ENCODE measurements at regions of chr1 and their contacts with region 1.

Region 1: DNA sequence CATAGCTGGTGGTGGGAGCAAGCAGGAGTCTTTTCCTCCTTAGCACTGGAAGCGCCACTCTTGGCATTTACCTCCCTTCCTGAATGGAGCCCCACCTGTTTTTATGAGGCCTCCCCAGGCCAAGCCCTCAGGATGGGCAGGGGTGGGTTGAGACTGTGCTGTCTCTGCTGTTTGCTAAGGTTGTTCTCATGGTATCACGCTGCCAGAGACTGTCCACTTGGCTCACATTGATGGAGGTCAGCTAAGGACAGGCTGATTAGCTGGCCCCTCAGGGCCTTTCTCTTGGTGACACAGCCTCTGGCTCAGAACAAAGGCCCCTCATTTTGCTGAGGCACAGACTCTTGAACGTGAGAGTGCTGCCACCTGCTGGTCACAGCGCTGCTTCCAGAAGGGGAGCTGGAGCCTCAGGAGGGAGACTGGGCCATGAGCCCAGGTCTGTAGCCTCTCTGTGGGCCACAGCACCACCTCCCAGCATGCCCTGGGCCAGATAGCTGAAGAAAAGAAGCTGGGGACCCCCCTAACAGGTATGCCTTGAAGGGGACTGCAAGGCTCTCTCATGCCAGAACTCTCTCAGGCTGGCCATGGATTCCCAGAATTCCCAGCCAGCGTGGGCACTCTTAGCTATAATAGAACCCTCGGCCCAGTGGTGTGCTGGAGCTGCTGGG is 85.6 kb downstream of the CD58 start:
- DNase-seq: peak; percentile 68 to 87 (median 77)
- H3K4me3 ChIP-seq: no peak overlapping the region
- H3K4me3 Mint-ChIP-seq: no peak overlapping the region
- H3K27ac ChIP-seq: no peak overlapping the region
- H3K27ac Mint-ChIP-seq: no peak overlapping the region
- H3K4me1 ChIP-seq: no peaks in the 10 kb centered on the region
- H3K4me1 Mint-ChIP-seq: peaks cover 0 to 3% (median 0%) of the 10 kb centered on the region in 3 donors
- H3K27me3 ChIP-seq: no peaks in the 10 kb centered on the region
- H3K27me3 Mint-ChIP-seq: peaks cover 0 to 1% of the 10 kb centered on the region in 2 donors

Region 2: DNA sequence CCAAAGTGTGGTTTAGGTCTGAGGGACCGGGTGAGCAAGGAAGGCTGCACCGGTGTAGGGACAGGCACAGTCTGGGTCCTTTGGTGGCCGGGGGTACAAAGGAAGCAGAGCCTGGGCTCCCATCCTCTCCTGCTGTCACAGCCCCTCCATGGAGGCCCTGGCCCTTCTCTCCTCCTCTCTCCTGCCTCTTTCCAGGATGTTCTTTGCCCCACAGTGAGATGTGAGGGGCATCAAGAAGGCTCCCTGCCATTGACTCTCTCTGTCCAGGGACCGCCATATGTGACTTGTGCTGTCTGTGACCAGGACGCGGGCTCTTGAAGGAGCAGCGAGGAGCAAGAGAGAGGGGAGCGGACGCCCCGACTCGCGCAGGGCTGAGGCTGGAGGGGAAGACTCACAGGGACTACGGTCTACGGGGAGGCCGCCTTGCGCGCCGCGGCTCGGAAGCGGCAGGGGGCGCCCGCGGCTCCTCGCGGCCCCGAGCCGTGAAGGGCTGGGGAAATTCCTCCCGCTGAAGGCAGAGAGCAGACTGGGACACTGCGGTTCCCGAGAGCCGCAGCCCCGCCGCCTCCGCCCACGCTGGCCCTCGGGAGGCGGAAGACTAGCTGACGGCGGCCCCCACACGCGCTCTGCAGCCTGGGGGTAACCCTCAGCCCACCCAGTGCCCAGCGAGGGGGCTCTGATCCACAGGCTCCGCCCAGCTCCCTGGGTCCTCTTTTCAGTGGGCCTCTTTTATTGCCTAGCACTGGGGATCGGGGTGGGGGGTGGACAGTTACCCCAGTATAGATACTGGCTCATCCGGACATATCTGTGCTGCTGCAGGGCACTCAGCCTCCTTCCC is 333.2 kb before region 1 on chr1:
- CTCF ChIA-PET with region 1: interaction called, 56 read pairs
- POLR2A ChIA-PET with region 1: no interaction called
- DNase-seq: peak; percentile 68 to 79 (median 76)
- H3K4me3 ChIP-seq: peak overlapping the region; percentile 50
- H3K4me3 Mint-ChIP-seq: peak overlapping the region in 6 of 7 donors; percentile 64 to 78 (median 72)
- H3K27ac ChIP-seq: no peak overlapping the region
- H3K27ac Mint-ChIP-seq: peak overlapping the region; percentile 47 to 90 (median 79)
- H3K4me1 ChIP-seq: peaks cover 18% of the 10 kb centered on the region
- H3K4me1 Mint-ChIP-seq: peaks cover 10 to 18% (median 14%) of the 10 kb centered on the region in 3 donors
- H3K27me3 ChIP-seq: no peaks in the 10 kb centered on the region
- H3K27me3 Mint-ChIP-seq: peaks cover 0 to 4% of the 10 kb centered on the region in 2 donors

Region 3: GRCh38 chr1:116231752-116232151 is 253.5 kb before region 1 on chr1:
- CTCF ChIA-PET with region 1: interaction called, 12 read pairs
- POLR2A ChIA-PET with region 1: no interaction called
- DNase-seq: no peak
- H3K4me3 ChIP-seq: no peak overlapping the region
- H3K4me3 Mint-ChIP-seq: no peak overlapping the region
- H3K27ac ChIP-seq: no peak overlapping the region
- H3K27ac Mint-ChIP-seq: peak overlapping the region in 1 of 8 donors; percentile 52
- H3K4me1 ChIP-seq: peaks cover 8% of the 10 kb centered on the region
- H3K4me1 Mint-ChIP-seq: peaks cover 7 to 15% (median 12%) of the 10 kb centered on the region in 3 donors
- H3K27me3 ChIP-seq: no peaks in the 10 kb centered on the region
- H3K27me3 Mint-ChIP-seq: peaks cover 3 to 7% of the 10 kb centered on the region in 2 donors

Region 4: DNA sequence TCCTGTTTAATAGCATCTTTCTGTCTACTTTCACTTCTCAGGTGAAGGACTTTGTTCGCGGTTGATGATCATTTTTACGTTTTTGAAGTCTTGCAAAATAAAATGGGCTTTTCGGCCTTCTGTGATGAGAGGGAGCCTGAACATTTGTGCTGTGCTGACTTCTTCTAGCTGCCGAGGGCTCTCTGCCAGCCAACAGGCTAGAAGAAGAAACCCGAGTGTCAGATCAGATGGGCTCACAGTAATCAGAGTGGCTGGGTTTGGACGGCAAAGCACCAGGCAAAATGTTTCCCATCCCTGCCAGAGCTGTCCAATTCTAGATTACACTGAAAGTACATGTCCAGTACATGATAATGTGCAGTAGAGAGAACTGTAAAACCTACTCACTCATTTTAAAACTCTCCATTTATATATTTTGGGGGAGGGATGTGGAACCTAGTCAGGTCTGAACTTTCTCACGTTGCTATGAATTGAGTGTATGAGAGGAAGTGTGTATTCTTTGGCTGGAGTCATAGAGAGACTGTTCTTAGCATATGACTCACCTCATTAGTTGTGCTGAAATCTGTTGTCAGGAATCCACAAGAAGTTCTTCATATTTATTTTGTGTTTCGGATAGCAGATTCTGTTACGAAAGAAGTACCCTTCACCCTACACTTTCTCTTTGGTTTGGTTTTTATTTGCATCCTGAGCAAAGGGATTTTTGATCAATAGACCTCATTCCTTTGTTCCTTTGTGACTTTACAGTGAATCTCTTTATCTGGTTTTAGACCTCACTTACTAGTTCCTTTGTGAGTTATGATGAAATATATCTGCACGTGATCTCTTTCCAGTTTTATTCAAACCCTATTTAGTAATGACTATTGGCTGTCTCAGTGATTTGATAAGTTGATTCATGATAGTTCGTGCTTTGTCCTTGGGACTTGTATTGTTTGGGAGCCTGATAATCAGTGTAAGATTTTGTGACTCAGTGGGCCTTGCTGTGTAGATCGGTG is 107.4 kb before region 1 on chr1:
- CTCF ChIA-PET with region 1: interaction called, 13 read pairs
- POLR2A ChIA-PET with region 1: no interaction called
- DNase-seq: peak; percentile 9 to 62 (median 54)
- H3K4me3 ChIP-seq: peak overlapping the region; percentile 34
- H3K4me3 Mint-ChIP-seq: peak overlapping the region; percentile 83 to 97 (median 91)
- H3K27ac ChIP-seq: peak overlapping the region; percentile 79
- H3K27ac Mint-ChIP-seq: peak overlapping the region; percentile 86 to 99 (median 96)
- H3K4me1 ChIP-seq: peaks cover 78% of the 10 kb centered on the region
- H3K4me1 Mint-ChIP-seq: peaks cover 81 to 88% (median 84%) of the 10 kb centered on the region in 3 donors
- H3K27me3 ChIP-seq: no peaks in the 10 kb centered on the region
- H3K27me3 Mint-ChIP-seq: peaks cover 0 to 2% of the 10 kb centered on the region in 2 donors

Region 5: GRCh38 chr1:116498789-116499628 is 13.8 kb after region 1 on chr1:
- CTCF ChIA-PET with region 1: interaction called, 117 read pairs
- POLR2A ChIA-PET with region 1: no interaction called
- DNase-seq: peak in 4 of 5 donors; percentile 24 to 59 (median 44)
- H3K4me3 ChIP-seq: no peak overlapping the region
- H3K4me3 Mint-ChIP-seq: no peak overlapping the region
- H3K27ac ChIP-seq: no peak overlapping the region
- H3K27ac Mint-ChIP-seq: peak overlapping the region in 6 of 8 donors; percentile 32 to 94 (median 84)
- H3K4me1 ChIP-seq: peaks cover 28% of the 10 kb centered on the region
- H3K4me1 Mint-ChIP-seq: peaks cover 28 to 36% (median 30%) of the 10 kb centered on the region in 3 donors
- H3K27me3 ChIP-seq: no peaks in the 10 kb centered on the region
- H3K27me3 Mint-ChIP-seq: peaks cover 0 to 4% of the 10 kb centered on the region in 2 donors

Region 6: DNA sequence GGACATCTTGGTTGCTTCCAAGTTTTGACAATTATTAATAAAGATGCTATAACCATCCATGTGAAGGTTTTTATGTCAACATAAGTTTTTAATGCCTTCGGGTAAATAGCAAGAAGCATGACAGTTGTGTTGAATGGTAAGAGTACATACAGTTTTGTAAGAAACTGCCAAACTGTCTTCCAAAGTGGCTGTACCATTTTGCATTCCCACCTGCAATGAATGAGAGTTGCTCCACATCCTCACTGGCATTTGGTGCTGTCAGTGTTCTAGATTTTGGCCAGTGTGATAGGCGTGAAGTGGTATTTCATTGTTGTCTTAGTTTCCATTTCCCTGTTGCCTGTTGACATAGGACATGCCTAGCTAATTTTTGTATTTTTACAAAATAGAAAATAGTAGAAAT is 40.2 kb after region 1 on chr1:
- CTCF ChIA-PET with region 1: no interaction called
- POLR2A ChIA-PET with region 1: no interaction called
- DNase-seq: no peak
- H3K4me3 ChIP-seq: no peak overlapping the region
- H3K4me3 Mint-ChIP-seq: no peak overlapping the region
- H3K27ac ChIP-seq: no peak overlapping the region
- H3K27ac Mint-ChIP-seq: peak overlapping the region in 2 of 8 donors; percentile 32 to 77
- H3K4me1 ChIP-seq: no peaks in the 10 kb centered on the region
- H3K4me1 Mint-ChIP-seq: peaks cover 0 to 3% (median 0%) of the 10 kb centered on the region in 3 donors
- H3K27me3 ChIP-seq: no peaks in the 10 kb centered on the region
- H3K27me3 Mint-ChIP-seq: no peaks in the 10 kb centered on the region

Region 7: GRCh38 chr1:116544588-116545358 is 59.6 kb after region 1 on chr1:
- CTCF ChIA-PET with region 1: no interaction called
- POLR2A ChIA-PET with region 1: no interaction called
- DNase-seq: no peak
- H3K4me3 ChIP-seq: no peak overlapping the region
- H3K4me3 Mint-ChIP-seq: no peak overlapping the region
- H3K27ac ChIP-seq: no peak overlapping the region
- H3K27ac Mint-ChIP-seq: peak overlapping the region in 7 of 8 donors; percentile 30 to 83 (median 73)
- H3K4me1 ChIP-seq: peaks cover 10% of the 10 kb centered on the region
- H3K4me1 Mint-ChIP-seq: peaks cover 44 to 80% (median 78%) of the 10 kb centered on the region in 3 donors
- H3K27me3 ChIP-seq: no peaks in the 10 kb centered on the region
- H3K27me3 Mint-ChIP-seq: no peaks in the 10 kb centered on the region

Measured in CD8-positive, alpha-beta memory T cell (primary cell).